Posterior vena cava (tissue), 2 donors: ENCODE measurements at regions of chr15 and their contacts with region 1.

Region 1: DNA sequence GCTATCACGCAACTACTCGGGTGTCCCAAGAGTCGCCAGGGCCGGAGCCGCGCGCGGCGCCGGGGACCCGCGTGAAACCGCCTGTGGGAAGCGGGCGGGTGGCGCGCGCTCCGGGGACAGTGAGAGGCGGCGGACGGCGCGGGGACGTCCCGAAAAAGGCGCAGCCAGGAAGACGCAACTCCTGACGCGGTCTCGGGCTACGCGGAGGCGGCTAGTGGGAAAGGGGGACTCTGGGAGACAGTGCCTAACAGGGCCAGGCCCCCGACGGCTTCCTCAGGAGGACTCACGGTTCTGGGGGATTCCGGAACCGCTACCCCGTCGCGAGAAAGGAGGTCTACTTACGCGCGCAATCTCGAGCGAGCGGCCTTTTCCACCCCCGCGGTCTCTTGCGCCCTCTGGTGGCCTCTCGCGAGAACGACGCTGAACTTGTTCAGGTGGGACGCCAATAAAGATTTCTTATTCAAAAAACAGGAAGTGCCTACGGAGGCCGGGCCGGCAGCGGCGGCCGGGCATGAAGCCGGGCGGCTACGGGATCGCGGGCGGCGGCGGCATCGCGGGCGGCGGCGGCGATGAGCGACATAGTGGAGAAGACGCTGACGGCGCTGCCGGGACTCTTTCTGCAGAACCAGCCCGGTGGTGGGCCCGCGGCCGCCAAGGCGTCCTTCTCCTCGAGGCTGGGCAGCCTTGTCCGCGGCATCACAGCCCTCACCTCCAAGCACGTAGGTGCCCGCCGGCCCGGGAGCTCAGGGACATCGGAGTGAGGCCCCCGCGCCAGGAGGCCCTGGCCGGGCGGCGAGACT is at the start of gene AP4E1:
- DNase-seq: peak; percentile 98
- total RNA-seq, gene AP4E1: 11.5 to 18.6 TPM

Region 2: GRCh38 chr15:50675536-50676144 is 232.8 kb before region 1 on chr15:
- intact Hi-C with region 1: loop called in 1 of 2 experiments (anchors 10 kb)
- DNase-seq: no peak